ENCODE measurements at regions of chr10 and their contacts with region 1.

Region 1: DNA sequence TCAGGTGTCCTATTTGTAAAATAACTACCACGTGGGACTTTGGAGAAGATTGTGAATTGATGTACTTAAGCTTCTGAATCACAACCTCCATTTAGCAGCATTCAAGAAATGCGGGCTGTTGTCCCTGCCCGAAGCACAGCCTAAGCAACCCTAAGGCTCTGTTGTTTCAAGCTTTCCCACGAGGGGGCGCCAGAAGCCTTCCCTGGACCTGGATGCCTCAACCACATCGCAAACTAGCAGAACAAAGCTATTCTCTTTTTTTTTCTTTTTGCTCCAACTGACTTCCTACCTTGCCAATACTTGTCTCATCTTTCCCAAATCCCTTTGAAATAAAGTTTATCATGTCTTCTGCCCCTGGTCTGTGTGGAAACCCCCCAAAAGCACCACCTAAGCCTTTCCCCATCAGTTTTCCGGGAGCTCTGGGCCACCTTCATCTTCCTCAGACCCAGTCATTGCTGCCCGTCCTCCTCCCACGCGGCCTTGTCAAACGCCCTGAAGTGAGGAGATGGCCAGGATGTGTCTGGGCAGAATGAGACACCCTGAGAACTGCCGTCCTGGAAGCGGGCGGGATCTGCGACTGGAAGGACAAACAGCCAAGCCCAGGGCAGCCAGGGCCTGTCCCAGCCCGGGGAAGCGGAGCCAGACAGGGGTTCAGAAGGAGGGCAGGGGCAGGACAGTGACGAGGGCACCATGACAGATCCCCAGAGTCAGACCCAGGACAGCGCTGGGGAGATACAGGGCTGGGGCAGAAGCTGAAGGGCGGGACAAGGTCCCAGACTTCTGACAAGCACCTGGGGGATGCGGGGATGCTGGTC is 112.7 kb downstream of the SLIT1 start:
- DNase-seq: peak; percentile 74 to 83
- ATAC-seq: peak; percentile 59 to 91 (median 85)
- H3K4me3 ChIP-seq: no peak overlapping the region
- H3K4me3 Mint-ChIP-seq: no peak overlapping the region
- H3K27ac ChIP-seq: no peak overlapping the region
- H3K27ac Mint-ChIP-seq: no peak overlapping the region
- H3K4me1 ChIP-seq: no peaks in the 10 kb centered on the region
- H3K4me1 Mint-ChIP-seq: peaks cover 0 to 5% of the 10 kb centered on the region in 2 donors
- H3K27me3 ChIP-seq: peaks cover 5% of the 10 kb centered on the region
- H3K27me3 Mint-ChIP-seq: peaks cover 30 to 35% of the 10 kb centered on the region in 2 donors
- CTCF ChIP-seq: peak; percentile 88

Region 2: GRCh38 chr10:96395931-96396877 is 676.9 kb before region 1 on chr10:
- intact Hi-C with region 1: no loop called
- DNase-seq: peak; percentile 46 to 82
- ATAC-seq: peak; percentile 71 to 88 (median 72)
- H3K4me3 ChIP-seq: no peak overlapping the region
- H3K4me3 Mint-ChIP-seq: no peak overlapping the region
- H3K27ac ChIP-seq: no peak overlapping the region
- H3K27ac Mint-ChIP-seq: no peak overlapping the region
- H3K4me1 ChIP-seq: peaks cover 12% of the 10 kb centered on the region
- H3K4me1 Mint-ChIP-seq: peaks cover 5 to 7% of the 10 kb centered on the region in 2 donors
- H3K27me3 ChIP-seq: no peaks in the 10 kb centered on the region
- H3K27me3 Mint-ChIP-seq: peaks cover 18 to 30% of the 10 kb centered on the region in 2 donors
- CTCF ChIP-seq: peak; percentile 71

Region 3: GRCh38 chr10:97025613-97026242 is 47.3 kb before region 1 on chr10:
- intact Hi-C with region 1: no loop called
- DNase-seq: peak; percentile 35 to 75
- ATAC-seq: peak; percentile 64 to 68 (median 66)
- H3K4me3 ChIP-seq: no peak overlapping the region
- H3K4me3 Mint-ChIP-seq: no peak overlapping the region
- H3K27ac ChIP-seq: no peak overlapping the region
- H3K27ac Mint-ChIP-seq: no peak overlapping the region
- H3K4me1 ChIP-seq: no peaks in the 10 kb centered on the region
- H3K4me1 Mint-ChIP-seq: no peaks in the 10 kb centered on the region
- H3K27me3 ChIP-seq: no peaks in the 10 kb centered on the region
- H3K27me3 Mint-ChIP-seq: peaks cover 0 to 2% of the 10 kb centered on the region in 2 donors
- CTCF ChIP-seq: peak; percentile 73

Region 4: GRCh38 chr10:97106207-97106606 is 33.1 kb after region 1 on chr10:
- intact Hi-C with region 1: no loop called
- DNase-seq: no peak
- ATAC-seq: no peak
- H3K4me3 ChIP-seq: no peak overlapping the region
- H3K4me3 Mint-ChIP-seq: no peak overlapping the region
- H3K27ac ChIP-seq: no peak overlapping the region
- H3K27ac Mint-ChIP-seq: no peak overlapping the region
- H3K4me1 ChIP-seq: peaks cover 13% of the 10 kb centered on the region
- H3K4me1 Mint-ChIP-seq: peaks cover 0 to 11% of the 10 kb centered on the region in 2 donors
- H3K27me3 ChIP-seq: no peaks in the 10 kb centered on the region
- H3K27me3 Mint-ChIP-seq: peaks cover 0 to 17% of the 10 kb centered on the region in 2 donors
- CTCF ChIP-seq: no peak

Region 5: GRCh38 chr10:97117372-97117771 is 44.3 kb after region 1 on chr10:
- intact Hi-C with region 1: loop called (anchors 1 kb)
- DNase-seq: peak in 1 of 2 donors; percentile 30
- ATAC-seq: no peak
- H3K4me3 ChIP-seq: no peak overlapping the region
- H3K4me3 Mint-ChIP-seq: no peak overlapping the region
- H3K27ac ChIP-seq: no peak overlapping the region
- H3K27ac Mint-ChIP-seq: no peak overlapping the region
- H3K4me1 ChIP-seq: no peaks in the 10 kb centered on the region
- H3K4me1 Mint-ChIP-seq: peaks cover 0 to under 1% of the 10 kb centered on the region in 2 donors
- H3K27me3 ChIP-seq: no peaks in the 10 kb centered on the region
- H3K27me3 Mint-ChIP-seq: peaks cover 2 to 10% of the 10 kb centered on the region in 2 donors
- CTCF ChIP-seq: peak; percentile 16

Region 6: GRCh38 chr10:97149079-97149531 is 76.0 kb after region 1 on chr10:
- intact Hi-C with region 1: no loop called
- DNase-seq: no peak
- ATAC-seq: no peak
- H3K4me3 ChIP-seq: no peak overlapping the region
- H3K4me3 Mint-ChIP-seq: no peak overlapping the region
- H3K27ac ChIP-seq: no peak overlapping the region
- H3K27ac Mint-ChIP-seq: no peak overlapping the region
- H3K4me1 ChIP-seq: no peaks in the 10 kb centered on the region
- H3K4me1 Mint-ChIP-seq: no peaks in the 10 kb centered on the region
- H3K27me3 ChIP-seq: no peaks in the 10 kb centered on the region
- H3K27me3 Mint-ChIP-seq: peaks cover 0 to 7% of the 10 kb centered on the region in 2 donors
- CTCF ChIP-seq: no peak

Measured in natural killer cell (primary cell).